AG04450 (cell line): ENCODE measurements at regions of chr15 and their contacts with region 1.

Region 1: DNA sequence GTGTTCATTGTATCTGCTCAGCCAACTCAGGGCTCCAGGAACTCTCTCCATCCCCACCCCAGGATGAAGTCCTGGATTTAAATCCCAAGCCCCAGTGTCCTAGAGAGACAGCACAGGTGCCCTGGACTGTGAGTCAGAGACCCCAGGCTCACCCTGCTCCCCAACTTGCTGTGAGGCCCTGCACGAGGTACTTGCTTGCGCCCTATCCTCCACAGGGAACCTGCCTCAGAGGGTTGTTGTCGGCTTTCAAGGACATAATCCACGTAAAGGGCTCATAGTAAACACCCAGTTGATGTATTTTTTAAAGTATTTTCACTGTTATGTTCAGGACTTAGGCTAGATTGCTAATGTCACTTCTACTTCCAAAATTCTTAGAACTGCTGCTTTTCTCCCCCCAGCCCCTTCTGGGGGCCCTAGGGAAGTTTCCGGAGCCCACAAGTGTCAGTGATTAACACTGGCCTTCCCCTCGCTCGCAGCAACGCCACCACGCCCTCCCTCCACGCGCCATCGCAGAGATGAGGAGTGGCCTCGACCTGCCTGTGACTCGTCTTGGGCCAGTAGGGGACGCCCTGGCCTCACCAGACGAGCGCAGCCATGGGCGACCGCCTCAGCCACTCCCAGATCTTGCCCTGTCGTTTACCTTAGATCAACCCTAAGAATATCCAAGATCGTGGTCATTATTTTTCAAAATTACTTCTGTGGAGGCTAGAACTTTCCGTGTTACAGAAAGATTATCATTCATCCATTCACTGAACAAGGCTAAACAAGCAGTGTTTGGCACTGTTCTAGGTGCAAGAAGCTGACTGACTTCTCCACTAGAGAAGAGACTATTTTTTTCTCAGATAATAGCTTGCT is 6.0 kb upstream of the SRP14 start:
- DNase-seq: no peak
- H3K4me3 ChIP-seq: peak overlapping the region; percentile 31
- H3K27ac ChIP-seq: no peak overlapping the region
- H3K27me3 ChIP-seq: no peaks in the 10 kb centered on the region
- CTCF ChIP-seq: peak; percentile 93

Region 2: DNA sequence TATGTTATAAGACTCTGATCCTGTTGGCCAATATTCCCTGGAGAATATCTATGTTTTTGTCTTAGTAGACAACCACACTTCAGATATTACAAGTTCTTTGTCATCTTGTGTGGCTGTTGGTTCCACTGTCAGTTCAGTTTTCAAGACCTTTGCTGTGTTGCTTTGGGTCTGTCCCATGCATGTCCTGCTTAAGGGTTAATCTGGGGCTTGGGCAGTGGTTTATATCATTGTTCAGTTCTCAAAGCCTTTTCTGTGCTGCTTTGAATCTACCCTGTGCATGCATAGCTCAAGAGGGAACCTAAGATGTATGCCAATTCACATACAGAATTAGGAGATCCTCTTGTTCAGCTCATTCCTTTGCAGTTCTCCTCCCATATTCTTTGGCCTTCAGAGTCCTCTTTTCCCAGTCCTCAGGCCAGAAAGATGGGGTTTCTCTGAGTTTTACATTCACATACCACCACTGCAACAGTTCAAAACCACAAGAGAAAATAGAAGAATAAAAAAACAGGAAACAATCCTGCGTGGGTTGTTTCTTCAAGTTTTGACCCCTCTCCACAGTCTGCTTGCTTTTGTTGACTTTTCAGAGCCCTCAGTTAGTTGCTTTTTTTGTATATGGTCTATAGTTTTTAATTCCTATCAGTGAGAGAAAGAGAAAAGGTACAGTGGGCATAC is 137.6 kb after region 1 on chr15:
- CTCF ChIA-PET with region 1: interaction called, 12 read pairs
- POLR2A ChIA-PET with region 1: no interaction called
- DNase-seq: no peak
- H3K4me3 ChIP-seq: no peak overlapping the region
- H3K27ac ChIP-seq: no peak overlapping the region
- H3K27me3 ChIP-seq: no peaks in the 10 kb centered on the region
- CTCF ChIP-seq: no peak